ENCODE measurements at regions of chr16 and their contacts with region 1.

Region 1: DNA sequence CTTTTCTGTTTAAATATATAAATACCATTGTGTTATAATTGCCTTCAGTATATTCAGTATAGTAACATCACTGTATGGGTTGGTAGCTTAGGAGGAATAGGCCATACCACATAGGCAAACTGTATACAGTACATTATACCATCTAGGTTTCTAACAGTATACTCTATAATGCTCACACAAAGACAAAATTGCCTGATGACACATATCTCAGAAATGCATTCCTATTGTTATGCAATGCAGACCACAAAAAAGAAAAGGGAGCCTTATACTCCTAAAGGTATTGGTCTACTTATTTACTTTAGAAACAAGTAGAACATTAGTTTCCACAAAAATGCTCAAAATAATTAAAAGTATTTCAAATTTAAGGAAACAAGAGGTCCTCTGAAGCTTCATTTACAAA is 47.9 kb downstream of the SETD6 start:
- DNase-seq: peak; percentile 74
- ATAC-seq: peak; percentile 77
- H3K4me3 ChIP-seq: no peak overlapping the region
- H3K27ac ChIP-seq: no peak overlapping the region
- H3K4me1 ChIP-seq: peaks cover 12% of the 10 kb centered on the region
- H3K27me3 ChIP-seq: no peaks in the 10 kb centered on the region
- CTCF ChIP-seq: no peak

Region 2: DNA sequence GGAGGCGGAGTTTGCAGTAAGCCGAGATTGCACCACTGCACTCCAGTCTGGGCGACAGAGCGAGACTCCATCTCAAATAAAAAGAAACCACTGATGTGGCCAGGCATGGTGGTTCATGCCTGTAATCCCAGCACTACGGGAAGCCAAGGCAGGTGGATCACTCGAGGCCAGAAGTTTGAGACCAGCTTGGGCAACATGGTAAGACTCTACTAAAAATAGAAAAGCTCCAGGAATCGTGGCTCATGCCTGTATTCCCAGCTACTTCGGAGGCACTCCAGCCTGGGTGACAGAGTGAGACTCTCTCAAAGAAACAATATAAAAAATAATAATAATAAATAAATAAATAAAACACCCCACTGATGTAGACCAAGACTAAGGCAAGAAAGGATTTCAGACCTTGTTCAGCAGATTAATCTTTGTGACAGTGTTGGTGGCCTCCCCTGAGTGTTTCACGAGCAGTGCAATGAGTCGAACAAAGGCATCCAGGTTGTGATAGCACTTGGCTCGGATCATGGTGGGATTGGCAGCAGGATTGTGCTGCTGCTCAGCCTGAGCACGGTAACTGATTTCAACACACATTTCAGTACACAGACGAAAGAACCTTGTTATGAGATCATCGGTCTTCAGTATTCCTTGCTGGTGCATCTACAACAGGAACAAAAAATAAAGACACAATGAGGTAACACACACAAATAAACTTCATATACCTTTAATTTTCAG is 29.3 kb before region 1 on chr16:
- CTCF ChIA-PET with region 1: no interaction called
- POLR2A ChIA-PET with region 1: no interaction called
- intact Hi-C with region 1: loop called (anchors 5 kb)
- DNase-seq: no peak
- ATAC-seq: no peak
- H3K4me3 ChIP-seq: no peak overlapping the region
- H3K27ac ChIP-seq: no peak overlapping the region
- H3K4me1 ChIP-seq: no peaks in the 10 kb centered on the region
- H3K27me3 ChIP-seq: no peaks in the 10 kb centered on the region
- CTCF ChIP-seq: no peak

Measured in PC-3 (cell line).